Right lobe of liver (tissue), 6 donors: ENCODE measurements at regions of chr17 and their contacts with region 1.

Region 1: DNA sequence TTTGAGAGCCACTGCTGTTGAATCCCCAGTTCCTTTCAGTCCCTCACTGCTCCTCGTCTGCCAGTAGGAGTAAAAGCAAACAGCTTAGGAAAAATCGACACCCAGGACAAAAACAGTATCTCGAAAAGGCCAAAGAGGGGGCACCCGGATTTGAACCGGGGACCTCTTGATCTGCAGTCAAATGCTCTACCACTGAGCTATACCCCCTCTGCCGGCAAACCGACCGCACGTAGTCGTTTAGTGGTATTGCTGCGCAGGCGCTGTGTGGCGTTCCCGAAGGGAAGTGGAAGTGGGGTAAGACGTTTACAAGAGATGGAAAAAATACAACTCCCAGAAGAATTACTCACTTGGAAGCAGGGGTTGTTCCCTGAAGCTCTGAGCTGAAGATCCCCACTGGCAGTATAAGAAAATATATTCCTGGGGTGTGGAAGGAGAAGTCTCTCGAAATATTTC is 2.2 kb upstream of the PLXDC1 start:
- DNase-seq: peak; percentile 90 to 91 (median 90)
- ATAC-seq: peak; percentile 72 to 82 (median 76)
- H3K4me3 ChIP-seq: peak overlapping the region; percentile 69 to 76 (median 74)
- H3K27ac ChIP-seq: peak overlapping the region; percentile 67 to 80 (median 68)
- H3K4me1 ChIP-seq: peaks cover 0 to 11% (median 2%) of the 10 kb centered on the region in 4 donors
- H3K27me3 ChIP-seq: peaks cover 0 to 3% of the 10 kb centered on the region in 2 donors
- CTCF ChIP-seq: peak in 3 of 4 donors; percentile 16 to 27 (median 16)
- POLR2A ChIP-seq: no peak

Region 2: DNA sequence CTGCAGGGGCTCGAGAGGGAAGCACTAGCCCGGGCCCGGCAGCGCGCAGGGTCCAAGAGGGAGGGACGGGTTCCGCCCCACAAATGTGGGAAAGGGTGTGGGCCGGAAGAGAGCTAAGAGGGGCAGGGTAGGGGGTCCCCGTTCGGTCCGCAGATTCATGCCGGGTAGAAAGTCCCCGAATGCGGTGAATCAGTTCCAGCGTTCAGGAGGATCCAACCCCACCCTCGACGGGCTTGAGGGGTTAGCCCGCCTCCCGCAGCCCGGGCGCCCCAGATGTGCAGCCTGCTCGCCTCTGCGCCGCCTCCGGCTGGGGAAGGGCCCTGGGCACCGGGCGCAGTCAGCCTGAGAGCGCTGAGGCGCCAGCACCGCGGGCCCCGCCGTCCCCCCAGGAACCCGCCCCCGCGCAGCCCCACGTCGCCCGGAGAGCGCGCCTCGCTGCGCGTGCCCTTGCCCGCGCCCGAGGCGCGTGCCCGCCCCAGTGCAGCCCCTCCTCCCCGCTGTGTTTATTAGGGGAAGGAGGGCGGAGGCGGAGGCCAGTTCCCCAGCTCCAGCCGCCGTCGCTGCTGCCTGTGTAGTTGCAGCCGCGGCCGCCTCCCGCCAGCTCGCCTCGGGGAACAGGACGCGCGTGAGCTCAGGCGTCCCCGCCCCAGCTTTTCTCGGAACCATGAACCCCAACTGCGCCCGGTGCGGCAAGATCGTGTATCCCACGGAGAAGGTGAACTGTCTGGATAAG is 283.9 kb before region 1 on chr17 and contains the start of gene LASP1:
- intact Hi-C with region 1: loop called in 1 of 2 experiments (anchors 10 kb)
- DNase-seq: peak; percentile 92 to 94 (median 93)
- ATAC-seq: peak; percentile 59 to 83 (median 78)
- H3K4me3 ChIP-seq: peak within 1 kb of the TSS; percentile 79 to 99 (median 94)
- H3K27ac ChIP-seq: peak within 1 kb of the TSS; percentile 82 to 96 (median 93)
- H3K4me1 ChIP-seq: peaks cover 0 to 41% (median 18%) of the 10 kb centered on the region in 4 donors
- H3K27me3 ChIP-seq: no peaks in the 10 kb centered on the region
- CTCF ChIP-seq: no peak
- POLR2A ChIP-seq: peak; percentile 98
- total RNA-seq, gene LASP1: 52.2 to 124 (median 84.8) TPM

Region 3: DNA sequence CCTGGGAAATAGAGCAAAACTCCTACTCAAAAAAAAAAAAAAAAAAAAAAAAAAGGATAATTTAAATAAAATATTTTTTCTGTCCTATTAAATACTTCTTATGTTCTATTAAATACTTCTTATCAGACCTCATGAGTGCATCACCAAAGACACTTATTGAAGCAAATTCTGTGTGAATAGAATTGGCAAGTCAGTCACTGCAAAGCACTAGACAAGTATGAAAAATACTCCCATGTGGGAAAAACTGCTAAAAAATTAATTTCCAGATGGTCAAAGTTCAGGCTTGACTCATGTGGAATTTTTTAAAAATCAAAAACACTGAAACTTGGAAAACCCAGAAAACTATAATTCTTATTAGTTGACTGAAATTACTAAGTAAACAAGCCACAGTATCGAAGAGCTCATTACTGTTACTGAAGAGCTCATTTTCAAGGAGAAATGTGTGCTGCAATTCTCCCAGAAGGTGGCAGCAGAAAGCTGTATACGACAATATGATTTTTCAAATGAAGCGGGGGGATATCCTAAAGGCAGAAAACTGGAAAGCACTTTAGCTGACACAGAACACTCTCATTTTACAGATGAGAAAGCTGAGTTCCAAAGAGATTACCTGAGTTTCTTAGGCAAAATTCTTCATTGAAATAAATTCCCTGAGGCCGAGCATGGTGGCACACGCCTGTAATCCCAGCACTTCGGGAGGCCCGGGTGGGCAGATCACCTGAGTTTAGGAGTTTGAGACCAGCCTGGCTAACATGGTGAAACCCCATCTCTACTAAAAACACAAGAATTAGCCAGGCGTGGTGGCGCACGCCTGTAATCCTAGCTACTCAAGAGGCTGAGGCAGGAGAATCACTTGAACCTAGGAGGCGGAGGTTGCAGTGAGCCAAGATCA is 170.5 kb before region 1 on chr17:
- intact Hi-C with region 1: loop called (anchors 5 to 10 kb)
- DNase-seq: no peak
- ATAC-seq: peak; percentile 65 to 82 (median 72)
- H3K4me3 ChIP-seq: no peak overlapping the region
- H3K27ac ChIP-seq: no peak overlapping the region
- H3K4me1 ChIP-seq: no peaks in the 10 kb centered on the region
- H3K27me3 ChIP-seq: no peaks in the 10 kb centered on the region
- CTCF ChIP-seq: peak; percentile 75 to 83 (median 80)
- POLR2A ChIP-seq: no peak